ENCODE measurements at regions of chr16 and their contacts with region 1.

Region 1: DNA sequence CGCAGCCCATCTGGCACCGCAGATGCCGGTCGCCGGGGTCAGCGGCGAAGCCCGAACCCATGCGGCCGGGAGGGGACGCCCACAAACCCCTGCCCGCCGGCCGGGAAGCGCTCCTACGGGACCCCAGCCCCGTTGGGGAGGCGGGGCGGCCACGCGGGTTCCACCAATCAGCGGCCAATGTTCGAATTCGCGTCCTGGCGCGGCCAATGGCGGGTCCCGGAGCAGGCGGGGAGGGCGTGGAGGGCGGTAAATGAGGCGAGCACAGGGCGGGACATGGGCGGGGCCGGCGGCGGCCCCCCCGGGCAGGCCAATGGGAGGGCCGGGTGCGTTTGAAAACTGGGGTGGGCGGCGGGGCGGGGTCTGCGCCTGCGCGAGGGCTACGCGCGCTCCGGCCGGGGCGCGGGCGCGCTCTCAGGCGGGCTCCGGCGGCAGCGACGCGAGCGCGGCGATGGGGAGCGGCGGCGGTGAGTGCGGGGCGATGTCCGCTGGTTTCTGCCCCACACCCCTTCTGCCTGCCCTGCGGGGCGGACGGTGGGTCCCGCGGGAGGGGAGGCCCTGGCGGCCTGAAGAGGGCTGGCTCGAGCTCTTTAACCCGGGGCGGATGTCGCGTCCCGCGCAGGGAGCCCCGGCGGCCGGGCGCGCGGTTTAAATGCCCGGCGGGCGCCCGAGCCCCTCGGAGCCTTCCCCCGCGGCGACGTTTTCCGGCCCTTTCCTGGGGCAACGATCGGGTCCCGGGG is at the start of gene CCNF:
- DNase-seq: peak; percentile 98
- H3K4me3 ChIP-seq: peak within 1 kb of the TSS; percentile 100
- H3K27ac ChIP-seq: peak within 1 kb of the TSS; percentile 96
- H3K4me1 ChIP-seq: peaks cover 27% of the 10 kb centered on the region
- H3K27me3 ChIP-seq: no peaks in the 10 kb centered on the region
- CTCF ChIP-seq: no peak
- total RNA-seq, gene CCNF: 71.7 and 76.1 TPM in 2 replicates

Region 2: GRCh38 chr16:2194852-2195321 is 234.3 kb before region 1 on chr16:
- CTCF ChIA-PET with region 1: no interaction called
- POLR2A ChIA-PET with region 1: no interaction called
- intact Hi-C with region 1: no loop called
- DNase-seq: peak; percentile 48
- H3K4me3 ChIP-seq: no peak overlapping the region
- H3K27ac ChIP-seq: no peak overlapping the region
- H3K4me1 ChIP-seq: peaks cover 7% of the 10 kb centered on the region
- H3K27me3 ChIP-seq: peaks cover 26% of the 10 kb centered on the region
- CTCF ChIP-seq: peak; percentile 38; the same call in 1 of the 2 replicates

Region 3: DNA sequence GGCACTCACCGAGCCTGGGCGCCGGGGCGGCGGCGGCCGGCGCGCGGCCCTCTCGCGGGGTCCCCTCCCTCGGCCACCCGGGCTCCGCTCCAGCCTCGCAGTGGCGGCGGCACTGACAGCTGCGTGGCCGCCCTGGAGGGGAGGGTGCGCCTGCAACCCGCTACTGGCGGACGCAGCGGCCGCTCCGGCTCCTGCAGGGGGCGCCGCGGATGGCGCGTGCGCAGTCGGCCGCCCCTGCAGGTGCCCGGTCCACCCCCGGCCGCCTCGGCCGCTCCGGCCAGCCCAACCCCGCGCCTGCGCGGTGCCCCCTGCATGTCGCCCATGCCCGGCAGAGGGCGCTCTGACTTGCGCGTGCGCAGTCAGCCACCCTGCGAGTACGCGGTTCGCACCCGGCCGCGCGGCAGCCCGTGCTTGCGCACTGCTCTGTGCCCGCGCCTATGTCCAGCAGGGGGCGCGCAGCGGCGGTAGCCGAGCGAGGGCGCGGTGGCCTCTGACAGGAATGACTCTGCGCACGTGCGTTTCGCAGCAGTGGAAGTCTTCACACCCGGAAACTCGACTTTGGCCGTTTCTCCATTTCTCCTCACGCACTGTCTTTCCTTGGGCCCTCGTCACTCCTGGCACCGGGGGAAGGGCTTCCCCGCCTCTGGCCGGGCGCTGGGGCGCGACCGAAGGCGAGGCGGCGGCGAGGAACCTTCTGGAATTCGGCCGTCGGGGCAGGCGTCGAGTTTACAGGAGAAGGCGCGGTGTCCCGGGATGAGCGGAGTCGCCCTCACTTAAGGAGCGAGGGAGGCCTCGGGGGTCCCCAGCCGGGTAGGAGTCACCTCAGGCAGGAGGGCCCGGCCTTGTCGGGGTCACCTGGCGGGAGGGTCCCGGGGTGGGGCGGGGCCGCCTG is 88.4 kb before region 1 on chr16 and contains the start of gene ABCA3:
- CTCF ChIA-PET with region 1: no interaction called
- POLR2A ChIA-PET with region 1: no interaction called
- intact Hi-C with region 1: loop called (anchors 5 kb)
- DNase-seq: peak; percentile 96
- H3K4me3 ChIP-seq: peak within 1 kb of the TSS; percentile 75
- H3K27ac ChIP-seq: no peak within 1 kb of the TSS
- H3K4me1 ChIP-seq: no peaks in the 10 kb centered on the region
- H3K27me3 ChIP-seq: peaks cover 34% of the 10 kb centered on the region
- CTCF ChIP-seq: peak; percentile 99
- total RNA-seq, gene ABCA3: 9.0 and 13.7 TPM in 2 replicates

Region 4: DNA sequence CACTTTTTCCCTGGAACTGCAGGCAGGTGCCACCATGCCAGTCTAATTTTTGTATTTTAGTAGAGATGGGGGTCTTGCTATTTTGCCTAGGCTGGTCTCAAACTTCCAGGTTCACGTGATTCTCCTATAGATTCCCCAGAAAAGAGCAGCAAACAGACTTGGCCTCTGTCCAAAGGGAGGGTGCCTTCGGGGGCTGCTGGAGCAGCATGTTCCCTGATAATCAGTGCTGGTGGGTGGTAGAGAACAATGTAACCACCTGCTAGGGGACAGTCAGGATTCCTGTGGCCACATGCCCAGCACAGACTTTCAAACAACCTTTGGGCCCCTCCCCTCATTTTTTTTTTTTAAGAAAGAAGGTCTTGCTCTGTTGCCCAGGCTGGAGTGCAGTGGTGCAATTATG is 14.1 kb before region 1 on chr16:
- CTCF ChIA-PET with region 1: no interaction called
- POLR2A ChIA-PET with region 1: interaction called, 10 read pairs
- intact Hi-C with region 1: no loop called
- DNase-seq: no peak
- H3K4me3 ChIP-seq: no peak overlapping the region
- H3K27ac ChIP-seq: no peak overlapping the region
- H3K4me1 ChIP-seq: no peaks in the 10 kb centered on the region
- H3K27me3 ChIP-seq: no peaks in the 10 kb centered on the region
- CTCF ChIP-seq: no peak

Measured in A673 (cell line).